Activated CD4-positive, alpha-beta T cell treated with anti-CD3 and anti-CD28 coated beads, Interleukin-2, amount 10 ng/mL, durations not matched to agents 7 days and 5 days (primary cell): ENCODE measurements at regions of chr19 and their contacts with region 1.

Region 1: GRCh38 chr19:58513694-58514563 is 2.1 kb upstream of the SLC27A5 start:
- DNase-seq: peak; percentile 96
- H3K4me3 Mint-ChIP-seq: peak overlapping the region; percentile 81
- H3K27ac Mint-ChIP-seq: peak overlapping the region; percentile 90
- H3K4me1 Mint-ChIP-seq: peaks cover 39% of the 10 kb centered on the region
- H3K27me3 Mint-ChIP-seq: no peaks in the 10 kb centered on the region

Region 2: GRCh38 chr19:58395220-58396029 is 118.5 kb before region 1 on chr19 and contains the start of gene RNF225:
- CTCF ChIA-PET with region 1: no interaction called
- POLR2A ChIA-PET with region 1: no interaction called
- DNase-seq: no peak
- H3K4me3 Mint-ChIP-seq: no peak within 1 kb of the TSS
- H3K27ac Mint-ChIP-seq: peak within 1 kb of the TSS; percentile 41
- H3K4me1 Mint-ChIP-seq: peaks cover 31% of the 10 kb centered on the region
- H3K27me3 Mint-ChIP-seq: no peaks in the 10 kb centered on the region
- total RNA-seq, gene RNF225: 0.35 to 0.74 TPM

Region 3: GRCh38 chr19:58475714-58476497 is 38.0 kb before region 1 on chr19 and contains the start of gene ZNF446:
- CTCF ChIA-PET with region 1: interaction called, 11 read pairs
- POLR2A ChIA-PET with region 1: no interaction called
- DNase-seq: peak; percentile 98
- H3K4me3 Mint-ChIP-seq: peak within 1 kb of the TSS; percentile 84
- H3K27ac Mint-ChIP-seq: peak within 1 kb of the TSS; percentile 96
- H3K4me1 Mint-ChIP-seq: peaks cover 21% of the 10 kb centered on the region
- H3K27me3 Mint-ChIP-seq: no peaks in the 10 kb centered on the region
- total RNA-seq, gene ZNF446: 7.6 to 7.9 TPM

Region 4: DNA sequence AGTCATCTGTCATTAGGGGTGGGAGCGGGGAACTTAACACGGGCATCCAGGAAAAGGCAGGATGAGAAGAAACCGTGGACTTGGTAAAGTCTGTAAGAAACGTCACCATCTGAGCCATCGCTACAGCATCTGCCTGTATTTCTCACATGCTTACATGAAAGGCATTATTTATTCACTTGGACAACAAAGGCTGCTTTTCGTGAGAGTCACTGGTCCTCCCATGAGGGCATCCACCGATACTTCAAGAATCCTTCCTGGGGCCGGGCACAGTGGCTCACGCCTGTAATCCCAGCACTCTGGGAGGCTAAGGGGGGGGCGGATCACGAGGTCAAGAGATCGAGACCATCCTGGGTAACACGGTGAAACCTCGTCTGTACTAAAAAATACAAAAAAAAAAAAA is 21.7 kb before region 1 on chr19:
- CTCF ChIA-PET with region 1: interaction called, 14 read pairs
- POLR2A ChIA-PET with region 1: no interaction called
- DNase-seq: no peak
- H3K4me3 Mint-ChIP-seq: no peak overlapping the region
- H3K27ac Mint-ChIP-seq: no peak overlapping the region
- H3K4me1 Mint-ChIP-seq: peaks cover 12% of the 10 kb centered on the region
- H3K27me3 Mint-ChIP-seq: no peaks in the 10 kb centered on the region

Region 5: GRCh38 chr19:58499021-58499927 is 14.7 kb before region 1 on chr19:
- CTCF ChIA-PET with region 1: interaction called, 34 read pairs
- POLR2A ChIA-PET with region 1: no interaction called
- DNase-seq: peak; percentile 98
- H3K4me3 Mint-ChIP-seq: peak overlapping the region; percentile 86
- H3K27ac Mint-ChIP-seq: peak overlapping the region; percentile 91
- H3K4me1 Mint-ChIP-seq: peaks cover 24% of the 10 kb centered on the region
- H3K27me3 Mint-ChIP-seq: no peaks in the 10 kb centered on the region

Region 6: GRCh38 chr19:58531034-58531840 is 17.3 kb after region 1 on chr19:
- CTCF ChIA-PET with region 1: interaction called, 11 read pairs
- POLR2A ChIA-PET with region 1: no interaction called
- DNase-seq: no peak
- H3K4me3 Mint-ChIP-seq: no peak overlapping the region
- H3K27ac Mint-ChIP-seq: no peak overlapping the region
- H3K4me1 Mint-ChIP-seq: peaks cover 2% of the 10 kb centered on the region
- H3K27me3 Mint-ChIP-seq: peaks cover 11% of the 10 kb centered on the region

Region 7: DNA sequence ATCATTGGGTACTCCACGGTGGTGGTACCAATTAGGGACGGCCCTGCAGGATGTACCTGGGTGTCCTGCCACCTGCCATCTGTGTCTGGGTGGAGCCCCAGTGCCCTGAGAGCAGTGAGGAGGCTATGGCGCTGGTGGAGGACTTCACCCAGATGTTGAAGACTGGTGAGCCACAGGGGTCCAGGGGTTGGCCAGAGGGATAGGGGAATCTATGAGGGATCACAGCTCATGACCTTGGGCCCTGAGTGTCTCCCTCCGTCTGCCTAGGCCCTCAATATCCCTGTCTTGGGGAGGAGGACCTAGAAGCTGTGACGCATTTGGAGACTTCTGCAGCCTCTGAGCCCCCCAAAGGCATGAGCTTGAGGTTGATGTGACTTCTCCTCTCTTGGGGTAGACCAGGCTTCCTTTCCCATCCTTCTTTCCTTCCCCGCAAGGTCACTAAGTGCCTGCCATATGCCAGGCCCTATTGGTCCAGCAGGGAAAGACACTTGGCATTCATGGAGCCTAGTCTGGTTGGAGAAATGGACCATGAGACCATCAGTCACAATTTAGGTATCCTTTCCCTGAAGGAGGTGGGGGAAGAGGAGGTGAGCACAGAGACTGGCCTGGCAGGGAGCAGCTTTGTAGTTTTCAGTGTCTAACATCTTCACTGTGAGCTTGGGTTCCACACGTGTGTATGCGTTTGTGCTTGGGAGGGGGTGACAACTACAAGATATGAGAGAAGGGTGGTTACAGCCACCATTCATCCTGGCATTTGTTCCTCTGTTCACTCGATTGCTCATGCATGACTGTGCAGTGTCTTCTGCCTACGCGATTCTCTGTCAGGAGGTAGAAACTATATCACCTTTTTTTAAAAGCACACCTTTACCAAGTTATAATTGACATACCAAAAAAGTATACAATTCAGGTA is 64.3 kb after region 1 on chr19:
- CTCF ChIA-PET with region 1: interaction called, 72 read pairs
- POLR2A ChIA-PET with region 1: no interaction called
- DNase-seq: no peak
- H3K4me3 Mint-ChIP-seq: no peak overlapping the region
- H3K27ac Mint-ChIP-seq: no peak overlapping the region
- H3K4me1 Mint-ChIP-seq: peaks cover 43% of the 10 kb centered on the region
- H3K27me3 Mint-ChIP-seq: no peaks in the 10 kb centered on the region